ENCODE measurements at regions of chr15 and their contacts with region 1.

Region 1: GRCh38 chr15:20652914-20653313 is 111.3 kb upstream of the GOLGA6L6 start:
- DNase-seq: no peak
- ATAC-seq: no peak
- H3K4me3 ChIP-seq: no peak overlapping the region
- H3K4me3 Mint-ChIP-seq: no peak overlapping the region
- H3K27ac ChIP-seq: no peak overlapping the region
- H3K27ac Mint-ChIP-seq: no peak overlapping the region
- H3K4me1 ChIP-seq: no peaks in the 10 kb centered on the region
- H3K4me1 Mint-ChIP-seq: no peaks in the 10 kb centered on the region
- H3K27me3 ChIP-seq: peaks cover 0 to under 1% of the 10 kb centered on the region in 2 experiments
- H3K27me3 Mint-ChIP-seq: no peaks in the 10 kb centered on the region
- CTCF ChIP-seq: no peak

Region 2: DNA sequence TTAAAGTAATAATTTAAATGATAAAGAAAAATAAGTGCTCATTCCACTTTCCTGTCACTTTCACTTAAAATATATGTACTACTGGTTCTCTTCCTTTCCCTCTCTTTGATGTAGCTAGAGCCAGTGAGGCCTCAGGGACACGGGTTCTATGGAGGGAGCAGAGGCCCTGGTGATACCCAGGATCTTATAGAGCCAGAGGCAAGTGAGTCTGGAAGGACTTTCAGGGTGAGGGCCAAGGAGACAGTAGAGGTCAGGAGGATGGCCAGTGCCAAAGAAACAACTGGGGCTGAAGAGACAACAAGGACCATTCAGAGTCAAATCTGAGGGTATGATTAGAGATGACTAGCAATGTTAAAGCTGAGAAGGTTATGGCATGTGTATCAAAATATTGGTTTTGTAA is 12.7 kb after region 1 on chr15:
- CTCF ChIA-PET with region 1: no interaction called
- POLR2A ChIA-PET with region 1: no interaction called
- intact Hi-C with region 1: loop called in 1 of 2 experiments (anchors 2 kb)
- DNase-seq: no peak
- ATAC-seq: no peak
- H3K4me3 ChIP-seq: no peak overlapping the region
- H3K4me3 Mint-ChIP-seq: no peak overlapping the region
- H3K27ac ChIP-seq: no peak overlapping the region
- H3K27ac Mint-ChIP-seq: no peak overlapping the region
- H3K4me1 ChIP-seq: no peaks in the 10 kb centered on the region
- H3K4me1 Mint-ChIP-seq: no peaks in the 10 kb centered on the region
- H3K27me3 ChIP-seq: no peaks in the 10 kb centered on the region
- H3K27me3 Mint-ChIP-seq: no peaks in the 10 kb centered on the region
- CTCF ChIP-seq: no peak